CD4-positive, alpha-beta memory T cell (primary cell): ENCODE measurements at regions of chr6 and their contacts with region 1.

Region 1: GRCh38 chr6:135145063-135145800 is 35.9 kb upstream of the MYB start:
- DNase-seq: peak in 4 of 5 donors; percentile 35 to 50 (median 40)
- H3K4me3 ChIP-seq: no peak overlapping the region
- H3K4me3 Mint-ChIP-seq: peak overlapping the region in 7 of 8 donors; percentile 18 to 83 (median 54)
- H3K27ac ChIP-seq: no peak overlapping the region
- H3K27ac Mint-ChIP-seq: peak overlapping the region; percentile 51 to 94 (median 79)
- H3K4me1 ChIP-seq: peaks cover 12% of the 10 kb centered on the region
- H3K4me1 Mint-ChIP-seq: peaks cover 14 to 30% (median 25%) of the 10 kb centered on the region in 4 donors
- H3K27me3 ChIP-seq: no peaks in the 10 kb centered on the region
- H3K27me3 Mint-ChIP-seq: no peaks in the 10 kb centered on the region

Region 2: GRCh38 chr6:135075018-135075417 is 70.2 kb before region 1 on chr6:
- CTCF ChIA-PET with region 1: interaction called, 13 read pairs
- POLR2A ChIA-PET with region 1: no interaction called
- intact Hi-C with region 1: no loop called
- DNase-seq: no peak
- H3K4me3 ChIP-seq: no peak overlapping the region
- H3K4me3 Mint-ChIP-seq: no peak overlapping the region
- H3K27ac ChIP-seq: no peak overlapping the region
- H3K27ac Mint-ChIP-seq: no peak overlapping the region
- H3K4me1 ChIP-seq: no peaks in the 10 kb centered on the region
- H3K4me1 Mint-ChIP-seq: peaks cover 0 to 4% (median 3%) of the 10 kb centered on the region in 4 donors
- H3K27me3 ChIP-seq: no peaks in the 10 kb centered on the region
- H3K27me3 Mint-ChIP-seq: peaks cover 0 to 2% of the 10 kb centered on the region in 2 donors

Region 3: GRCh38 chr6:135105710-135106109 is 39.5 kb before region 1 on chr6:
- CTCF ChIA-PET with region 1: interaction called, 23 read pairs
- POLR2A ChIA-PET with region 1: interaction called, 3 read pairs
- intact Hi-C with region 1: no loop called
- DNase-seq: no peak
- H3K4me3 ChIP-seq: no peak overlapping the region
- H3K4me3 Mint-ChIP-seq: no peak overlapping the region
- H3K27ac ChIP-seq: no peak overlapping the region
- H3K27ac Mint-ChIP-seq: no peak overlapping the region
- H3K4me1 ChIP-seq: peaks cover 36% of the 10 kb centered on the region
- H3K4me1 Mint-ChIP-seq: peaks cover 24 to 42% (median 29%) of the 10 kb centered on the region in 4 donors
- H3K27me3 ChIP-seq: no peaks in the 10 kb centered on the region
- H3K27me3 Mint-ChIP-seq: no peaks in the 10 kb centered on the region

Region 4: DNA sequence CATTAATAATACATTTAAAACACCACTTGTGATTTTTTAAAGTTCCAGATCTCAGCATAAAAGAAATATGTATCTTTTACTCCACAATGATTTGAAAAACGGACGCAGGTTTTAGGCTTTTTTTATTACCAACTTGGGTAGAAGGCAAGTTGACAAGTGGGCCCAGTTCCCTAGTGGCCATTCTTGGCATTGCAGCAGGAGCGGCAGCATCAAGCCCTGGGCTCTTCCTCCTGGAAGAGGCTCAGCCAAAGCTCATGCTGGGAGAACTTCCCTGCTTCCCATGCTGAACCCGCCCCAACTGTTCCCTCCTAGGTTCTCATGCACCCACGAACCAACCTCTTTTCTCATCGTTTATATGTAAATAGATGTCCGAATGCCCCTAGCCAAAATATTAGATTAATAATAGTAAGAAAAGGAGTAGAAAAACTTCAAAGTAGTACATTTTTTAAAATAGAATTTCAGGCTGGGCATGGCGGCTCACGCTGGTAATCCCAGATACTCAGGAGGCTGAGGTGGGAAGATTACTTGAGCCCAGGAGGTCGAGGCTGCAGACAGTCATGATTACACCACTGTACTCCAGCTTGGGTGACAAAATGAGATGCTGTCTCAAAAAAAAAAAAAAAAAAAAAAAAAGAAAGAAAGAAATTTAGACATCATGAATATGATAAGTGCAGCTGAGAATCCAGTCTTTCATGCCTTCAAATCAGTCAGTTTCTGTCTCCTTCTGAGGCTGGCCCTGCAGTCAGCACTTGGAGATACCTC is 17.6 kb after region 1 on chr6:
- CTCF ChIA-PET with region 1: interaction called, 13 read pairs
- POLR2A ChIA-PET with region 1: no interaction called
- intact Hi-C with region 1: no loop called
- DNase-seq: peak; percentile 3 to 35 (median 19)
- H3K4me3 ChIP-seq: no peak overlapping the region
- H3K4me3 Mint-ChIP-seq: peak overlapping the region in 6 of 8 donors; percentile 18 to 48 (median 30)
- H3K27ac ChIP-seq: no peak overlapping the region
- H3K27ac Mint-ChIP-seq: peak overlapping the region in 2 of 7 donors; percentile 36 to 37
- H3K4me1 ChIP-seq: peaks cover 12% of the 10 kb centered on the region
- H3K4me1 Mint-ChIP-seq: peaks cover 6 to 27% (median 11%) of the 10 kb centered on the region in 4 donors
- H3K27me3 ChIP-seq: no peaks in the 10 kb centered on the region
- H3K27me3 Mint-ChIP-seq: peaks cover 0 to 5% of the 10 kb centered on the region in 2 donors

Region 5: GRCh38 chr6:135257631-135258405 is 112.6 kb after region 1 on chr6:
- CTCF ChIA-PET with region 1: no interaction called
- POLR2A ChIA-PET with region 1: no interaction called
- intact Hi-C with region 1: loop called (anchors 1 kb)
- DNase-seq: no peak
- H3K4me3 ChIP-seq: no peak overlapping the region
- H3K4me3 Mint-ChIP-seq: no peak overlapping the region
- H3K27ac ChIP-seq: no peak overlapping the region
- H3K27ac Mint-ChIP-seq: no peak overlapping the region
- H3K4me1 ChIP-seq: no peaks in the 10 kb centered on the region
- H3K4me1 Mint-ChIP-seq: no peaks in the 10 kb centered on the region
- H3K27me3 ChIP-seq: no peaks in the 10 kb centered on the region
- H3K27me3 Mint-ChIP-seq: peaks cover 0 to 7% of the 10 kb centered on the region in 2 donors

Region 6: DNA sequence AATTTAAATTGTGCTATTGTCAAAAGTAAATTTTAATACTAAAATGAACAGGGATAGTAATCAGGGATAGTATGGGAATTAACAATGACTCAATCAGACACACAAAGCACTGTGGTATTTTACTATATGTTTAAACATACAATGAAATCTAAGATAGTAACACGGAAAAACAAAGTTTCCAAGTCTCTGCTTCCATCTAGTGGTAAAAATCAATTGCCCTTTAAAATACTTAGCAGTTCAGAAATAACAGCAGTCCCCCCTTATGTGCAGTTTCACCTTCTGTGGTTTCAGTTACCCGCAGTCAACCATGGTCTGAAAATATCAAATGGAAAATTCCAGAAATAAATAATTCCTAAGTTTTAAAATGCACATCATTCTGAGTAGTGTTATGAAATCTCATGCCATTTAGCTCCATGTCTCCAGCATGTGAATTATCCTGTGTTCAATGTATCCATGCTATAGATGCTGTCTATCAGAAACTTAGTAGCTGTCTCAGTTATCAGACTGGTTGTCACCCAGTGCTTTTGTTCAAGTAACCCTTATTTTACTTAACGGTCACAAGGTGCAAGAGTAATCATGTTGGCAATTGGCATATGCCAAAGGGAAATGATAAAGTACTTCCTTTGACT is 293.8 kb after region 1 on chr6:
- CTCF ChIA-PET with region 1: interaction called, 3 read pairs
- POLR2A ChIA-PET with region 1: no interaction called
- intact Hi-C with region 1: loop called (anchors 1 kb)
- DNase-seq: peak in 2 of 5 donors; percentile 6 to 15
- H3K4me3 ChIP-seq: no peak overlapping the region
- H3K4me3 Mint-ChIP-seq: peak overlapping the region in 3 of 8 donors; percentile 5 to 29 (median 28)
- H3K27ac ChIP-seq: no peak overlapping the region
- H3K27ac Mint-ChIP-seq: peak overlapping the region in 1 of 7 donors; percentile 5
- H3K4me1 ChIP-seq: peaks cover 15% of the 10 kb centered on the region
- H3K4me1 Mint-ChIP-seq: peaks cover 5 to 19% (median 11%) of the 10 kb centered on the region in 4 donors
- H3K27me3 ChIP-seq: no peaks in the 10 kb centered on the region
- H3K27me3 Mint-ChIP-seq: no peaks in the 10 kb centered on the region